ENCODE measurements at regions of chr1 and their contacts with region 1.

Region 1: GRCh38 chr1:67053785-67054772 is at the start of gene SLC35D1:
- DNase-seq: peak; percentile 62 to 87 (median 83)
- ATAC-seq: peak; percentile 78
- H3K4me3 ChIP-seq: peak within 1 kb of the TSS; percentile 80 to 85
- H3K4me3 Mint-ChIP-seq: peak within 1 kb of the TSS; percentile 89
- H3K27ac ChIP-seq: peak within 1 kb of the TSS; percentile 90 to 96
- H3K27ac Mint-ChIP-seq: peak within 1 kb of the TSS; percentile 96
- H3K4me1 ChIP-seq: peaks cover 10% of the 10 kb centered on the region
- H3K4me1 Mint-ChIP-seq: peaks cover 35% of the 10 kb centered on the region
- H3K27me3 ChIP-seq: no peaks in the 10 kb centered on the region
- H3K27me3 Mint-ChIP-seq: no peaks in the 10 kb centered on the region
- CTCF ChIP-seq: no peak
- total RNA-seq, gene SLC35D1: 18.4 to 18.5 TPM

Region 2: DNA sequence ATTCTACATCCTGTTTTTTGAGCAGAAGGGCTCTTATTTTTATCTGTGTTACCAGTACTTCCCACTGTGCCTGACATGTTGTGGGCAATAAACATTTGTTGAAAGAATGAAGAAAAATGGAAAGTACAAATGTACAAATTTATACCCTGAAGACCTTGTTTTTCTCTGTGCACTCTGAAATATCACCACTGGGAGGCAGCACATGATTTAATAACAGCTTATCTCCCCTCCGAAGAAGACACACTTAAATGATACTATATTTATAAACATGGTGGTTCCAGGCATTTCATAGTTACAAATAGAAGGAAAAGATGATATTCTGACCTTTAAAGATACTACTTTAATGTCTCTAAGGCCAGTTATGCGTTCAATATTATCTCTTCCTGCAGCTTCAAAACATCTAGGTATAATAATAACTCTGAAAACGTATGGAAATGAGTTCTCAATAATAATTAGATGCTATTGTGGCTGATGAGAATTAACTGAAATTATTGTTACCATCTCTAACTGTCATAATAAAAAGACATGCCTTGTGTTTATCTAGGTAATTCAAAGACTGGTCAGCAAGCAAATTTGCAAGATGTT is 289.0 kb before region 1 on chr1:
- CTCF ChIA-PET with region 1: no interaction called
- POLR2A ChIA-PET with region 1: no interaction called
- intact Hi-C with region 1: loop called (anchors 2 to 5 kb)
- DNase-seq: peak; percentile 5 to 73 (median 53)
- ATAC-seq: peak; percentile 83
- H3K4me3 ChIP-seq: no peak overlapping the region
- H3K4me3 Mint-ChIP-seq: no peak overlapping the region
- H3K27ac ChIP-seq: no peak overlapping the region
- H3K27ac Mint-ChIP-seq: no peak overlapping the region
- H3K4me1 ChIP-seq: no peaks in the 10 kb centered on the region
- H3K4me1 Mint-ChIP-seq: peaks cover 15% of the 10 kb centered on the region
- H3K27me3 ChIP-seq: no peaks in the 10 kb centered on the region
- H3K27me3 Mint-ChIP-seq: no peaks in the 10 kb centered on the region
- CTCF ChIP-seq: peak; percentile 84

Region 3: GRCh38 chr1:66981679-66982078 is 72.4 kb before region 1 on chr1:
- CTCF ChIA-PET with region 1: interaction called, 3 read pairs
- POLR2A ChIA-PET with region 1: interaction called, 4 read pairs
- intact Hi-C with region 1: loop called (anchors 5 kb)
- DNase-seq: peak; percentile 18 to 86 (median 52)
- ATAC-seq: peak; percentile 96
- H3K4me3 ChIP-seq: peak overlapping the region; percentile 38 to 48
- H3K4me3 Mint-ChIP-seq: peak overlapping the region; percentile 75
- H3K27ac ChIP-seq: peak overlapping the region; percentile 44 to 78
- H3K27ac Mint-ChIP-seq: peak overlapping the region; percentile 79
- H3K4me1 ChIP-seq: peaks cover 22% of the 10 kb centered on the region
- H3K4me1 Mint-ChIP-seq: peaks cover 30% of the 10 kb centered on the region
- H3K27me3 ChIP-seq: no peaks in the 10 kb centered on the region
- H3K27me3 Mint-ChIP-seq: no peaks in the 10 kb centered on the region
- CTCF ChIP-seq: no peak

Region 4: GRCh38 chr1:67019600-67020136 is 34.4 kb before region 1 on chr1:
- CTCF ChIA-PET with region 1: no interaction called
- POLR2A ChIA-PET with region 1: no interaction called
- intact Hi-C with region 1: loop called in 1 of 2 experiments (anchors 5 kb)
- DNase-seq: no peak
- ATAC-seq: no peak
- H3K4me3 ChIP-seq: no peak overlapping the region
- H3K4me3 Mint-ChIP-seq: no peak overlapping the region
- H3K27ac ChIP-seq: no peak overlapping the region
- H3K27ac Mint-ChIP-seq: no peak overlapping the region
- H3K4me1 ChIP-seq: no peaks in the 10 kb centered on the region
- H3K4me1 Mint-ChIP-seq: peaks cover 3% of the 10 kb centered on the region
- H3K27me3 ChIP-seq: no peaks in the 10 kb centered on the region
- H3K27me3 Mint-ChIP-seq: no peaks in the 10 kb centered on the region
- CTCF ChIP-seq: no peak

Region 5: GRCh38 chr1:67214420-67215174 is 160.5 kb after region 1 on chr1:
- CTCF ChIA-PET with region 1: interaction called, 5 read pairs
- POLR2A ChIA-PET with region 1: no interaction called
- intact Hi-C with region 1: loop called in 1 of 2 experiments (anchors 5 kb)
- DNase-seq: peak in 7 of 9 experiments; percentile 11 to 66 (median 45)
- ATAC-seq: peak; percentile 55
- H3K4me3 ChIP-seq: no peak overlapping the region
- H3K4me3 Mint-ChIP-seq: no peak overlapping the region
- H3K27ac ChIP-seq: no peak overlapping the region
- H3K27ac Mint-ChIP-seq: no peak overlapping the region
- H3K4me1 ChIP-seq: peaks cover 10% of the 10 kb centered on the region
- H3K4me1 Mint-ChIP-seq: peaks cover 17% of the 10 kb centered on the region
- H3K27me3 ChIP-seq: no peaks in the 10 kb centered on the region
- H3K27me3 Mint-ChIP-seq: no peaks in the 10 kb centered on the region
- CTCF ChIP-seq: peak; percentile 65

Measured in CD8-positive, alpha-beta T cell (primary cell).